ENCODE measurements at regions of chr9 and their contacts with region 1.

Region 1: DNA sequence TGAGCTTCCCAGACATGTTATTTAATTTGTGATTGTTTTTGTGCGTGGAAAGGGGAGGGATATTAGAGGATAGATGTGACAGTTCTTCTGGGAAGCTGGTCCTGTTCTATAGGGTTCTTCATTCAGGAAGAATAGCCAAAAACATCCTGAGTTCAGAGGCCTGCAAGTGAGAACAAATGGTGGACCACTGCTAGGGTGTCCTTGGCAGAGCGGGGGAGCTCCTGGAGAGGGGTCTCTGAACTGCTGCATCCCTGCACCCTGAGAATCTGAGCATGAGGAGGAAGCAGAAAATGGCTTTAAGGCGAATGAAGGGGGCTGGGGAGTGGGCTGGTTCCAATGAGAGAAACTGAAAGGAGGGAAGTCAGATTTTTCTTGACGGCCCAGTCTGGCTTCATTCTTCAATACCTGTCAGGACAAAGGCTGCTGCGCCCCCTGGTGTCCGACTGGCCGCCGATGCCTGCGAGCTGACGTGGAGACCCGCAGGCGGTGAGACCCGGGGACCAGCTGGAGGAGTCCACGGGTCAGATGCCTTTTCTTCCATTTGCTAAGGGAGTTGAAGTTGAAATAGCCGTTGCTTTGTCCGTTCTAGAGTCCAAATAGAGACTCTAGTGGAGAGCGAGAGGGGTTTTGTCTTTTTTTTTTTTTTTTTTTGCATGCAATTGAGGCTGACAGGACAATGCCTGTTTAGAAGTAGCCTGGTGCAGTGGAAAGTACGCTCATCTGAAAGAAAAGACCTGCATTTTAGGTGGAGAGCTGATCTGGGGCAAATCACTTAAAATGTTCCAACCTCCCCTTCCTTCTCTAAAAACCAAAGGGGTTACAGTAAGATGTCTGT is 39.5 kb upstream of the NFIB start:
- DNase-seq: peak; percentile 92 to 99 (median 96)
- H3K4me3 ChIP-seq: peak overlapping the region in 55 of 59 donors; percentile 1 to 55 (median 37)
- H3K27ac ChIP-seq: peak overlapping the region; percentile 27 to 97 (median 85)
- H3K27me3 ChIP-seq: peaks cover 0 to 17% (median 0%) of the 10 kb centered on the region in 45 donors
- CTCF ChIP-seq: peak; percentile 82 to 97 (median 94)

Region 2: DNA sequence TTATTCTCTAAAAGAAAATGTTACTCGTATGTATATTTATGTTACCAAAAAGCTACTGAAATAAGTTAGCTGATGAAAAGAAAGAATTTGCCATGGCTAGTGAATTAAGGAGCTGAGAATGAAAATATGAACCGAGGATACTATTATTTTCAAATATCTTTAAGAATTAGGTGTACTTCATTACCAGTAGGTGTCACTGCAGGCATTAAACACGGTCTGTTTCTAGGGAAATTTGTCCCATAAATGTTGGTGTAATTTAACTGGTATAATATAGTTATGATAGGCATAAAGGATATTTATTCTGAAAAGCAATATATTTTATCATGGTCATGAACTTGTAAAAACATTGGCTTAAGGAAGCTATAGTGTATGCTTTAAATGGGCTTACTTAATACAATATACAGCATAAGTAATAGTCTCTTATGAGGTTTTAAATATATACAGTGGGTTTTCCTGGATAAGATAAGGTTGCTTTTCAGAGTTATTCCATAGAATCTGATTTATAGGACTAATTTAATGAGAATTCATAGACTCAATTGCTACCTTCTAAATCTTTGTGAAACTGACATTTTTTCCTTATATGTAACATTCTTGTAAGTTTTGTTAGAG is 1001.6 kb before region 1 on chr9:
- intact Hi-C with region 1: loop called in 1 of 2 experiments (anchors 10 kb)
- DNase-seq: no peak
- H3K4me3 ChIP-seq: no peak overlapping the region
- H3K27ac ChIP-seq: no peak overlapping the region
- H3K27me3 ChIP-seq: no peaks in the 10 kb centered on the region
- CTCF ChIP-seq: peak; percentile 48 to 86 (median 66)

Region 3: DNA sequence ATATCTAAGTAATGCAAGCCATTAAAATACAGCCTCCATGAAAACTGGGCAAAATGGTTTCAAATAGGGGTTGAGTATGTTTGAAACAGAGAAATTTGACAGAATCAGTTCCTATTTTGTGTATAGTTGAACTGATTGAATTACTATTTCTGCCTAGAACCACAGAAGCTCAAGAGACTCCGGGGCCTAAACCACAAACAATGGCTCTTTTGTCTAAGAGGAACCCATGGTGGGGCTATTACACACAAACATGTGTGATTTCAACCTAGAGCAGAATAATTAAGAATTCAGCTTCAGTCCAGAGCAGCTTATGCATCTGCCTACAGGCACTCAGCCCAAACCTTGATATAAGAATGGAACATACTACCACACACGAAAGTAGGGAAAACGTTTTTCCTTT is 902.7 kb before region 1 on chr9:
- intact Hi-C with region 1: loop called in 1 of 2 experiments (anchors 5 kb)
- DNase-seq: no peak
- H3K4me3 ChIP-seq: peak overlapping the region in 2 of 59 donors; percentile 11 to 32
- H3K27ac ChIP-seq: peak overlapping the region in 51 of 59 donors; percentile 6 to 87 (median 68)
- H3K27me3 ChIP-seq: no peaks in the 10 kb centered on the region
- CTCF ChIP-seq: peak in 3 of 56 donors; percentile 17 to 26 (median 21)

Region 4: DNA sequence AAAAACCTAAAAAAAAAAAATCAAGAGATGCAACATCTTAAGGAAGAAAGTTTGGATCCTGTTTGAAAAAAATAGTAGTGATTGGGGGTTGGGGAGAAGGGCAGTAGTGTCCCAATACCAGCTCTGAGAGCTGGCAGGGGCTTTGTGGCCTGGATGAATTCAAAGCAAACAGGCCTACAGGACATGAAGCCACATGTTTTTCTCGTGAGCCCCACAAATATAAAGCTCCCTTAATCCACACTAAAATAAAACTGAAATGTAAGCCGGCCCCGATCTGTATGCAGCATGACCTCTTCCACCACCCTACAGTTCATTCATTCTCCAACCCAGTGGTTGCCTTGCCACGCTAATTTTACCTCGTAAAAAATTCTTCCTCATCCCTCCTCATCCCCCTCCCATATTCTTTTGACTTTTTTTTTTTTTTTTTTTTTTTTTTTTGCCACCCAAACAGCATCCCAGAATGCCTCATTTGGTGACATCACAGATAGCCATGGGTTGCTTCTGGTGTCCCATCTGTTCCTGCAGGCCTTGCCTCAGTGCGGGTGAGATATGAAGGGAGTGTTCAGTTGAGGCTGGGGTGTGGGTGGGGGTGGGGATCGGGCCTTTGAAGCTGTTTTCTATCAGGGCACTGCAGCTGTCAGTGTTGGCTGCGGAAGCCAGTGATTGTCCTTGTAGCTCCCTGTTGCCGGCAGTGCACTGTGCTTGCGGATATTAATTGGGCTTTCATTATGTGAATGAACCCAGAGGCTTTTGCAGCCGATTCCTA is 42.1 kb after region 1 on chr9:
- intact Hi-C with region 1: loop called (anchors 1 to 2 kb)
- DNase-seq: peak; percentile 46 to 93 (median 78)
- H3K4me3 ChIP-seq: peak overlapping the region in 58 of 59 donors; percentile 5 to 69 (median 38)
- H3K27ac ChIP-seq: peak overlapping the region; percentile 3 to 95 (median 84)
- H3K27me3 ChIP-seq: no peaks in the 10 kb centered on the region
- CTCF ChIP-seq: peak in 5 of 56 donors; percentile 6 to 40 (median 18)

Measured in dorsolateral prefrontal cortex (tissue), 120 donors.